Activated CD4-positive, alpha-beta memory T cell treated with anti-CD3 and anti-CD28 coated beads, Interleukin-2, amount 10 ng/mL, durations not matched to agents 7 days and 5 days (primary cell): ENCODE measurements at regions of chr7 and their contacts with region 1.

Region 1: GRCh38 chr7:142535123-142535779 is 214.0 kb upstream of the PRSS1 start:
- DNase-seq: peak; percentile 83
- H3K4me3 Mint-ChIP-seq: peak overlapping the region; percentile 17
- H3K27ac Mint-ChIP-seq: peak overlapping the region; percentile 63
- H3K4me1 Mint-ChIP-seq: peaks cover 31% of the 10 kb centered on the region
- H3K27me3 Mint-ChIP-seq: peaks cover 5% of the 10 kb centered on the region

Region 2: DNA sequence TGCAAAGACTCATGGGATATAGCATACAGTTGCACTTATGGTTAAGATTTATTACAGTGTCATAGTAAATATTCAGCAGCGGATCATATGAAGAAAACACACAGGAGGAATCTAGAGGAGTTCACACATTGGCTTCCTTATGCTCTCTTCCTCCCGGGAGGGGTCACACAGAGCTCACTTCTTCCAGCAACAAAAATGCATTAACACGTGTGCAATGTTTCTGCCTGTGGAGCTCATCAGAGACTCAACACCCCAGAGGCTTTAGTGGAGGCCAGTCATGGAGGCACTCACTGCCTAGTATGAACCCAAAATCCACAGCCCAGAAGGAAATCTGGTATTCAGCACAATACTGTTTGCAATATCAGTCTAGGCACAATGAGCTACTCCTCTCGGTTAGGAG is 11.2 kb after region 1 on chr7:
- CTCF ChIA-PET with region 1: interaction called, 15 read pairs
- POLR2A ChIA-PET with region 1: no interaction called
- DNase-seq: no peak
- H3K4me3 Mint-ChIP-seq: no peak overlapping the region
- H3K27ac Mint-ChIP-seq: no peak overlapping the region
- H3K4me1 Mint-ChIP-seq: no peaks in the 10 kb centered on the region
- H3K27me3 Mint-ChIP-seq: peaks cover 3% of the 10 kb centered on the region

Region 3: GRCh38 chr7:142587578-142588191 is 52.4 kb after region 1 on chr7:
- CTCF ChIA-PET with region 1: interaction called, 14 read pairs
- POLR2A ChIA-PET with region 1: interaction called, 4 read pairs
- DNase-seq: no peak
- H3K4me3 Mint-ChIP-seq: peak overlapping the region; percentile 28
- H3K27ac Mint-ChIP-seq: peak overlapping the region; percentile 55
- H3K4me1 Mint-ChIP-seq: peaks cover 12% of the 10 kb centered on the region
- H3K27me3 Mint-ChIP-seq: no peaks in the 10 kb centered on the region

Region 4: GRCh38 chr7:142782922-142783900 is 248.0 kb after region 1 on chr7:
- CTCF ChIA-PET with region 1: interaction called, 14 read pairs
- POLR2A ChIA-PET with region 1: interaction called, 3 read pairs
- DNase-seq: peak; percentile 84
- H3K4me3 Mint-ChIP-seq: peak overlapping the region; percentile 64
- H3K27ac Mint-ChIP-seq: peak overlapping the region; percentile 89
- H3K4me1 Mint-ChIP-seq: peaks cover 22% of the 10 kb centered on the region
- H3K27me3 Mint-ChIP-seq: no peaks in the 10 kb centered on the region